ENCODE measurements at regions of chr9 and their contacts with region 1.

Region 1: GRCh38 chr9:33225319-33226149 is 14.4 kb upstream of the SPINK4 start:
- DNase-seq: peak; percentile 57
- ATAC-seq: no peak
- H3K4me3 ChIP-seq: no peak overlapping the region
- H3K27ac ChIP-seq: no peak overlapping the region
- H3K4me1 ChIP-seq: peaks cover 30% of the 10 kb centered on the region
- H3K27me3 ChIP-seq: peaks cover 0 to 8% of the 10 kb centered on the region in 2 experiments; a peak in 3 of 5 replicates
- CTCF ChIP-seq: peak; percentile 75
- EP300 ChIP-seq: no peak
- POLR2A ChIP-seq: no peak
- RAD21 ChIP-seq: peak; percentile 78

Region 2: GRCh38 chr9:33076358-33077004 is 149.1 kb before region 1 on chr9 and contains the start of gene SMU1:
- CTCF ChIA-PET with region 1: interaction called, 80 read pairs
- POLR2A ChIA-PET with region 1: interaction called, 5 read pairs
- in situ Hi-C with region 1: loop called (anchors 5 kb)
- intact Hi-C with region 1: loop called (anchors 1 kb)
- DNase-seq: peak; percentile 96
- ATAC-seq: peak; percentile 98
- H3K4me3 ChIP-seq: peak within 1 kb of the TSS; percentile 63 to 91 (median 90)
- H3K27ac ChIP-seq: peak within 1 kb of the TSS; percentile 87
- H3K4me1 ChIP-seq: peaks cover 33% of the 10 kb centered on the region
- H3K27me3 ChIP-seq: no peaks in the 10 kb centered on the region; a peak in 1 of 5 replicates
- CTCF ChIP-seq: peak; percentile 25; the same call in 1 of the 2 replicates
- EP300 ChIP-seq: no peak
- POLR2A ChIP-seq: peak; percentile 82 to 83
- RAD21 ChIP-seq: 0 out of 2 replicates have a peak, but pooled peaks have one; percentile 6
- total RNA-seq, gene SMU1: 36.6 and 51.5 TPM in 2 replicates

Region 3: GRCh38 chr9:33172256-33173238 is 53.0 kb before region 1 on chr9:
- CTCF ChIA-PET with region 1: no interaction called
- POLR2A ChIA-PET with region 1: no interaction called
- in situ Hi-C with region 1: no loop called
- intact Hi-C with region 1: loop called (anchors 2 kb)
- DNase-seq: peak; percentile 79
- ATAC-seq: peak; percentile 84
- H3K4me3 ChIP-seq: peak overlapping the region; percentile 19 to 53 (median 28); a peak in 4 of 6 replicates
- H3K27ac ChIP-seq: peak overlapping the region; percentile 72
- H3K4me1 ChIP-seq: peaks cover 53% of the 10 kb centered on the region
- H3K27me3 ChIP-seq: no peaks in the 10 kb centered on the region
- CTCF ChIP-seq: no peak
- EP300 ChIP-seq: no peak; a peak in 2 of 4 replicates
- POLR2A ChIP-seq: peak; percentile 25 to 42; a peak in 1 of 4 replicates
- RAD21 ChIP-seq: no peak

Region 4: DNA sequence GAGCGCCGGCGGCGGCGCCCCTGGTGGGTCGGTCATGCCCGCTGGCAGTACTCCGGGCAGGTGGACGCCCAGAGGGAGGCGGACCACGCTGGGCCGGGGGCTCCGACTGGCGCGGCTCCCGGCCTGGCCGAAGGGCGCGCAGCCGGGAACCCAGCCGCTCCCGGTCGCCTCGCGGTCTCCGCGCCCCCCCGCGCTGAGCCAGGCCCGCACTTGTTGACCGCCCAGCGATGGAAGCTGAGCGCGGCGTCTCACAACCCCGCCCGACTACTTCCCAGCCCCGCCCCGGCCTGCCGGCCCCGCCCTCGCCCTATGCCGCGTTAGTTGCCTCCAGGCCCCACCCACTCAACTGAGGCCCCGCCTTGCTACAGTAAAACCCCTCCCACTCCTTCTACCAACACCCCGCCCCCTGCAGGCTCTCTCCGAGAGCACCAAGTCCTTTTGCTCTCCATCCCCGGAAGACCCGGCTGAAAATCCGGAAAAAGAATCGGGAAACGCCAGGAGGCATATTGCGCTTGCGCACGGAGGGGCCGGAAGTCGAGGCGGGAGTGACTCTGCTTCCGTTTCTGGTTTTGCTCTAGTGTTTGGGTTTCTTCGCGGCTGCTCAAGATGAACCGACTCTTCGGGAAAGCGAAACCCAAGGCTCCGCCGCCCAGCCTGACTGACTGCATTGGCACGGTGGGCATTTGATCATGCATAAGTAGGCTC is 39.1 kb after region 1 on chr9 and contains the starts of genes BAG1 and CHMP5:
- CTCF ChIA-PET with region 1: interaction called, 4 read pairs
- POLR2A ChIA-PET with region 1: no interaction called
- in situ Hi-C with region 1: no loop called
- intact Hi-C with region 1: loop called (anchors 5 kb)
- DNase-seq: peak; percentile 98
- ATAC-seq: peak; percentile 94
- H3K4me3 ChIP-seq: peak within 1 kb of the TSS; percentile 89 to 100 (median 98)
- H3K27ac ChIP-seq: peak within 1 kb of the TSS; percentile 82
- H3K4me1 ChIP-seq: peaks cover 30% of the 10 kb centered on the region
- H3K27me3 ChIP-seq: no peaks in the 10 kb centered on the region; a peak in 1 of 5 replicates
- CTCF ChIP-seq: peak; percentile 48
- EP300 ChIP-seq: no peak
- POLR2A ChIP-seq: peak; percentile 69 to 70
- RAD21 ChIP-seq: no peak; the same call in 1 of the 2 replicates
- total RNA-seq, gene BAG1: 52.8 and 59.5 TPM in 2 replicates
- total RNA-seq, gene CHMP5: 57.3 and 91.4 TPM in 2 replicates

Measured in HepG2 (cell line).